ENCODE measurements at regions of chr6 and their contacts with region 1.

Region 1: GRCh38 chr6:131443514-131443913 is 129.5 kb upstream of the ARG1 start:
- DNase-seq: peak; percentile 60
- H3K4me3 ChIP-seq: peak overlapping the region; percentile 42
- H3K27ac ChIP-seq: no peak overlapping the region
- H3K4me1 ChIP-seq: peaks cover 32% of the 10 kb centered on the region
- CTCF ChIP-seq: no peak

Region 2: GRCh38 chr6:131231103-131231502 is 212.4 kb before region 1 on chr6:
- CTCF ChIA-PET with region 1: no interaction called
- POLR2A ChIA-PET with region 1: no interaction called
- intact Hi-C with region 1: no loop called
- DNase-seq: no peak
- H3K4me3 ChIP-seq: no peak overlapping the region
- H3K27ac ChIP-seq: no peak overlapping the region
- H3K4me1 ChIP-seq: no peaks in the 10 kb centered on the region
- CTCF ChIP-seq: no peak

Region 3: DNA sequence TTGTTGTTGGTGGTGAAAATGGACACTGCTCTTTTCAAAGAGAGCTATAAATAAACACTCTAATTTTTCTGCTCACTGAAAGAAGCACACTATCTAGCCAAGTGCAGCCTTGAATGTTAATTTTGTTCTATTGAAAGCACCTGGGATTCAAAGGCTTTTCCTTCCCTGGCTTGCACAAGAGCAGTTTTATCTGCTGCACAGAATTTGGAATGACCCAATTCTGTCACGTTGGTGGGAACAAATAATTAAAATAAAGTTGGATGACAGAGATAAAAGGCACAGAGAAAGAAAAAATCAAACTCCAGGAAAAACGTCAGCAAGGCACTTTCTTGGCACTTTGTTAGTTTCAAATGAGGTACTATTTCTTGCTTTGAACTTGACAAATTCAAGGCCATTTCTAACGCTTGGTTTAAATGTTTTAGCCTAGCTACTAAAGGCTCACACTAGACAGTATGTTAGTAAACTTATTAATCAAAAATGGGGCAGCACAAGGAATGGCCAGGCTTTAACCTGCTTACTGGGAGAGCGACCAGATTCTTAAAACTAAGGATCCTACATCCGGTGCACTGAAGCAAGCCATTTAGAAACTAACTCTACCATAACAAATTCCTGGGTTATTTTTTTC is 16.0 kb before region 1 on chr6:
- CTCF ChIA-PET with region 1: no interaction called
- POLR2A ChIA-PET with region 1: interaction called, 10 read pairs
- intact Hi-C with region 1: no loop called
- DNase-seq: no peak
- H3K4me3 ChIP-seq: peak overlapping the region; percentile 55
- H3K27ac ChIP-seq: no peak overlapping the region
- H3K4me1 ChIP-seq: peaks cover 17% of the 10 kb centered on the region
- CTCF ChIP-seq: no peak